AG04449 (cell line): ENCODE measurements at regions of chr12 and their contacts with region 1.

Region 1: GRCh38 chr12:54379401-54380201 is 4.9 kb downstream of the ZNF385A start:
- DNase-seq: no peak
- H3K4me3 ChIP-seq: peak overlapping the region; percentile 58
- CTCF ChIP-seq: peak; percentile 100

Region 2: GRCh38 chr12:53798575-53798974 is 581.0 kb before region 1 on chr12:
- CTCF ChIA-PET with region 1: no interaction called
- POLR2A ChIA-PET with region 1: no interaction called
- DNase-seq: no peak
- H3K4me3 ChIP-seq: no peak overlapping the region
- CTCF ChIP-seq: no peak

Region 3: GRCh38 chr12:54220092-54220557 is 159.5 kb before region 1 on chr12:
- CTCF ChIA-PET with region 1: interaction called, 66 read pairs
- POLR2A ChIA-PET with region 1: no interaction called
- DNase-seq: no peak
- H3K4me3 ChIP-seq: no peak overlapping the region
- CTCF ChIP-seq: peak; percentile 77

Region 4: GRCh38 chr12:54294152-54294952 is 85.2 kb before region 1 on chr12:
- CTCF ChIA-PET with region 1: interaction called, 66 read pairs
- POLR2A ChIA-PET with region 1: no interaction called
- DNase-seq: no peak
- H3K4me3 ChIP-seq: no peak overlapping the region
- CTCF ChIP-seq: peak; percentile 87

Region 5: DNA sequence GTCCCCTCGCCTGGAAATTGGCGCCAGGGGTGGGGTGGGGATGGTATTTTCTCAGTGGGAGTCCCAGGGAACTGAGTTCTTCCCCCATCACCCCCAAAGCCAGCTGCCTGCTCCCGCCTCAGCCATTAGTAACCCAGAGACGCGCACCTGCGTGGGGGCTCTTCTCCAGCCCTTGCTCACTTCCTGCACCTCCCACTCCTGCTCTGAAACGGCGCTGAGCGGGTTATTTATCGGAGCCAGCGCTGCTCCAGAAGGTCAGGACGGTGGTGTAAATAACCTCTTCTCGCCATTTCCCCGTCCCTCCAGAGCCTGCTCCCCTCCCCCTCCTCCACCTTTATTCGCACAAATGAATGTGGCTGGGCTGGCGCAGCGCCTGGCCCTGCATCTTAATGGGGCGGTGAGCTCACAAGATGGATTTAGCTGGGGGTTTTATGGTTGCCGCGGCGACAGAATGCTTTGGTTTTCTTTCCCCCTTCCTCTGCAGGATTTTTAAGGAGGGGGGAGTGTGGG is 27.5 kb before region 1 on chr12:
- CTCF ChIA-PET with region 1: interaction called, 31 read pairs
- POLR2A ChIA-PET with region 1: no interaction called
- DNase-seq: no peak
- H3K4me3 ChIP-seq: no peak overlapping the region; the same call in 1 of the 2 replicates
- CTCF ChIP-seq: no peak

Region 6: DNA sequence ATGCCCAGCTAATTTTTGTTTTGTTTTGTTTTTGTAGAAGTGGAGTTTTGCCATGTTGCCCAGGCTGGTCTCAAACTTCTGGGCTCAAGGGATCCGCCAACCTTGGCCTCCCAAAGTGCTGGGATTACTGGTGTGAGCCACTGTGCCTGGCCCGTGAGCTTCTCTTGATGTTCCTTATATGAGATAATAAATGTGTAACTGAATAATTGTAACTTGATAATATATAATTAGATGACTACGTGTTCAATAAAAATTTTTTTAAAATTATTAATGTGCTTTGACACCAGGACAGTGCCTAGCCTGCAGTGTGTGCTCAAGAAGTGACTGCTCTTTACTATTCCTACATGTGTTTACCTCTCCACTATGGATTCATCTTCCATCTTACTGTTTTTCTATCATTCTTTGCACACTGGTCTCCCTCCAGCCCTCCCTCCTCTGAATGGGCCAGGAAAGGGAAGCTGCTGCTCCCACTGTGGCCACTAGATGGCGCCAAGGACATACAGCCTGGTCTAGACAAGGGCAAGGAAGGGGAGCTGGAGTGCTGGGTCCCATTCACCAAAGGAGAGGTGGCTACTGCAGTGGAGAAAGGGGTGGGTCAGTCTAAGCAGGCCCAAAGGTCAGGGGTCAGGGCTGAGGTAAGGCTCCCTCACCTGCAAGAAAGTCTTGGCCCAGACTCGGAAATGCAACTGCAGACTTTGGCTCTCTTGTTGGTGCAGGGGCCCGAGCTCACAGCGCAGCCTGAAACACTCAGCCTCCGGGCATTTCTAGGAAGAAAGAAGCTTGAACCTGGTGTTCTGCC is 19.6 kb after region 1 on chr12:
- CTCF ChIA-PET with region 1: interaction called, 333 read pairs
- POLR2A ChIA-PET with region 1: interaction called, 3 read pairs
- DNase-seq: no peak
- H3K4me3 ChIP-seq: no peak overlapping the region
- CTCF ChIP-seq: peak; percentile 99

Region 7: GRCh38 chr12:54439521-54440255 is 60.1 kb after region 1 on chr12:
- CTCF ChIA-PET with region 1: interaction called, 152 read pairs
- POLR2A ChIA-PET with region 1: no interaction called
- DNase-seq: peak; percentile 71
- H3K4me3 ChIP-seq: no peak overlapping the region
- CTCF ChIP-seq: peak; percentile 68